B cell (primary cell): ENCODE measurements at regions of chr22 and their contacts with region 1.

Region 1: GRCh38 chr22:21867528-21868266 is at the start of gene MAPK1:
- DNase-seq: peak; percentile 98
- ATAC-seq: peak; percentile 90
- H3K4me3 ChIP-seq: peak within 1 kb of the TSS; percentile 64 to 93 (median 91)
- H3K4me3 Mint-ChIP-seq: peak within 1 kb of the TSS; percentile 94
- H3K27ac ChIP-seq: peak within 1 kb of the TSS; percentile 93 to 100
- H3K27ac Mint-ChIP-seq: peak within 1 kb of the TSS; percentile 93
- H3K4me1 ChIP-seq: peaks cover 39 to 40% of the 10 kb centered on the region in 2 donors
- H3K4me1 Mint-ChIP-seq: peaks cover 45% of the 10 kb centered on the region
- H3K27me3 ChIP-seq: no peaks in the 10 kb centered on the region
- H3K27me3 Mint-ChIP-seq: no peaks in the 10 kb centered on the region
- CTCF ChIP-seq: peak; percentile 39
- total RNA-seq, gene MAPK1: 145 and 155 TPM in 2 replicates

Region 2: DNA sequence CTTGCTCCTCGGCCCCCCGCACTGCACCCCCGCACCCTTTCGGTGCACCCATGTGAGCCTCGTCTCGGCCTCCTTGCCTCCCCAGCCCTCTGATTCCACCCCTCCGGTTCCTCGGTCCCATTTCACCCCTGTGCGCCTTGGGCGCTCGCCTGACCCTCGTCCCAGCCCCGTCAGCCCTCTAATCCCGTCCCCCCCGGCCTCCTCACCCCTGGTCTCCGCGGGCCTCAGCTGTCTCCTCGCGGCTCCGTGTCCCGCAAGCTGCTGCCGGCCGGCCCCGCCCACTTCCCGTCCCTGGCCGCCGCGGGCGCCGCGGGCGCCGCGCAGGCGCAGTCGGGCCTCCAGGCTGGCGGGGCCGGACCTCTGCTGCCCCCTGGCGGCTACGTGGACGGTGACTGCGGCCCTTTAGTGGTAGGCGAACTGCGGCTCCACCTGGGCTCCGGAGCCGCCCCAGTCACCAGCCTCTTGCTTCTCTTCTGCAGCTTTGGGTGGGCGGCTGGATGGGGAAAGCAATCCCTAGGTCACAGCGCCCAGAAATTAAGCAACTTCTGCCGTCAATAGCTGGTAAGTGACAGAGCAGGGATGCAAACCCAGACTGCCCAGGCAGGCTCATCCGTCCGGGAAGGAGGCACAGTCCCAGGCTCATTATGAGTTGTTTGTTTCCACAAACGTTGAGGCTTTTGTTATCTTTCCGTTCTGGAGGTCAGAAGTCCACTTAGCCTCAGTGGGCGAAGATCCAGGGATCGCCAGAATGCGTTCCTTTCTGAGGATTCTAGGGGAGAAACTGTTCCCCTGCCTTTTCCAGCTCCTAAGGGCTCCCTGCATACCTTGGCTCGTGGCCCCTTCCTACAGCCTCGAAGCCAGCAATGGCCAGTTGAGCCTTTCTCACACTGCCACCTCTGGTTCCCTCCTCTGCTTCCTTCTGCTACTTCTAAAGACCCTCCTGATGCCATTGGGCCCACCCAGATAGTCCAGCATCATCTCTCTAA is 85.2 kb after region 1 on chr22 and contains the start of gene PPM1F:
- CTCF ChIA-PET with region 1: interaction called, 3 read pairs
- POLR2A ChIA-PET with region 1: no interaction called
- intact Hi-C with region 1: loop called (anchors 2 kb)
- DNase-seq: peak; percentile 94
- ATAC-seq: peak; percentile 85
- H3K4me3 ChIP-seq: peak within 1 kb of the TSS; percentile 45 to 81 (median 74)
- H3K4me3 Mint-ChIP-seq: peak within 1 kb of the TSS; percentile 92
- H3K27ac ChIP-seq: peak within 1 kb of the TSS in 1 of 2 donors; percentile 53
- H3K27ac Mint-ChIP-seq: peak within 1 kb of the TSS; percentile 82
- H3K4me1 ChIP-seq: peaks cover 10 to 12% of the 10 kb centered on the region in 2 donors
- H3K4me1 Mint-ChIP-seq: peaks cover 19% of the 10 kb centered on the region
- H3K27me3 ChIP-seq: no peaks in the 10 kb centered on the region
- H3K27me3 Mint-ChIP-seq: no peaks in the 10 kb centered on the region
- CTCF ChIP-seq: peak; percentile 80
- total RNA-seq, gene PPM1F: 30.0 and 33.1 TPM in 2 replicates

Region 3: DNA sequence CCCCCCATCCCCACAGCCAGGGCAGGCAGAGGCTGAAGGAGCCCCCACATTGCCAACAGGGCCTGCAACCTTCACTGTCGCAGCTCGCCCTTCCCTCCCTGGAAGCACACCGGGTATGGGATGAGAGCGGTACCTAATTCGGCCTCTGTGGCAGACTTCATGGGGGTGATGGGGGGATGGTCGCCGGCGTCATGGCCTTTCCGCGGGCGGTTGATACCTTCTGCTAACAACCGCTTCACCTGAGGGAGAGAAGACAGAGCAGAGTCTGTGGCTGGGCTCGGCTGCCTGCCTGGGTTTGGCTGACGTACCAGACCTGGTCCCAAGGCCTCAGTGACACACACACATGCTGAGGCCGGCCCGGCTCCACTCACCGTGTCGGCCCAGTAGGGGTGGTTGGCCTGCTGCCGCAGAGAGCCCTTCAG is 96.1 kb after region 1 on chr22:
- CTCF ChIA-PET with region 1: no interaction called
- POLR2A ChIA-PET with region 1: no interaction called
- intact Hi-C with region 1: no loop called
- DNase-seq: no peak
- ATAC-seq: no peak
- H3K4me3 ChIP-seq: no peak overlapping the region
- H3K4me3 Mint-ChIP-seq: no peak overlapping the region
- H3K27ac ChIP-seq: no peak overlapping the region
- H3K27ac Mint-ChIP-seq: no peak overlapping the region
- H3K4me1 ChIP-seq: no peaks in the 10 kb centered on the region
- H3K4me1 Mint-ChIP-seq: no peaks in the 10 kb centered on the region
- H3K27me3 ChIP-seq: no peaks in the 10 kb centered on the region
- H3K27me3 Mint-ChIP-seq: no peaks in the 10 kb centered on the region
- CTCF ChIP-seq: no peak